Ovary (tissue), 10 donors: ENCODE measurements at regions of chr6 and their contacts with region 1.

Region 1: DNA sequence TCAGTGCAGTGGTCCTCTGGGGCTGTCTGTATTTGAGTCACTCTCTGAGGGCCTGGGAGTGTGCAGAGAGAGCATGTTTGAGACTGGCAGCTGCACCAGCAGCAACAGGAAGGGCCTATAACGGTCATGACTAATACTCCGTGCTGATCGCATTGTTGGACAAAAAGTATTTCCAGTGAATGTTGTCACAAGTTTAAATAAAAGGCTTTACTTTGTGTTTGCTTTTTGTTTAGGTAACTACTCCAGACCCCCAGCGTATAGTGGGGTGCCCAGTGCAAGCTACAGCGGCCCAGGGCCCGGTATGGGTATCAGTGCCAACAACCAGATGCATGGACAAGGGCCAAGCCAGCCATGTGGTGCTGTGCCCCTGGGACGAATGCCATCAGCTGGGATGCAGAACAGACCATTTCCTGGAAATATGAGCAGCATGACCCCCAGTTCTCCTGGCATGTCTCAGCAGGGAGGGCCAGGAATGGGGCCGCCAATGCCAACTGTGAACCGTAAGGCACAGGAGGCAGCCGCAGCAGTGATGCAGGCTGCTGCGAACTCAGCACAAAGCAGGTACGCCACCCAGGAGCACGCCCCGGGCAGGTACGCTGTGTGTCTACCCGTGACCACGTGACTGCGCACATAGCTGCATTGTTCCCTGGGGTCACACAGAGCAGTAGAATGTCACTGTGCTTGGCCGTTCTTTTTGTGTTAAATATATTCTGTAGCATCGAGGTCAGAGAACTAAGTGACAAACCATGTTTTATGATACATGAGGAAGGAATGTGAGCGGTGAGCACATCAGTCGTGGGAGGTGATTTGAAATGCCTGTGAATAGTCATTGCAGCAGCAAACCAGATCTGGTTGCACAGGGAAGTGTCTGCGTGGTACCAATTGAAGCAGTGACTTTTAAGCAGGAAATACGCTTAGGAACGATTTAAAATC is 174.7 kb downstream of the TMEM242 start:
- DNase-seq: peak in 1 of 5 donors; percentile 45
- H3K4me3 ChIP-seq: no peak overlapping the region
- H3K27ac ChIP-seq: no peak overlapping the region
- H3K4me1 ChIP-seq: peaks cover 25% of the 10 kb centered on the region
- H3K27me3 ChIP-seq: no peaks in the 10 kb centered on the region
- CTCF ChIP-seq: no peak
- EP300 ChIP-seq: no peak
- POLR2A ChIP-seq: no peak

Region 2: GRCh38 chr6:157110607-157111006 is 38.0 kb before region 1 on chr6:
- intact Hi-C with region 1: loop called in 1 of 4 experiments (anchors 1 kb)
- DNase-seq: no peak
- H3K4me3 ChIP-seq: no peak overlapping the region
- H3K27ac ChIP-seq: no peak overlapping the region
- H3K4me1 ChIP-seq: peaks cover 8% of the 10 kb centered on the region
- H3K27me3 ChIP-seq: no peaks in the 10 kb centered on the region
- CTCF ChIP-seq: no peak
- EP300 ChIP-seq: no peak
- POLR2A ChIP-seq: no peak